Calu3 (cell line): ENCODE measurements at regions of chr4 and their contacts with region 1.

Region 1: GRCh38 chr4:169024762-169025161 is 14.7 kb upstream of the CBR4 start:
- DNase-seq: peak; percentile 9
- H3K4me3 Mint-ChIP-seq: no peak overlapping the region
- H3K27ac Mint-ChIP-seq: no peak overlapping the region
- H3K4me1 Mint-ChIP-seq: peaks cover 11% of the 10 kb centered on the region
- H3K27me3 Mint-ChIP-seq: no peaks in the 10 kb centered on the region
- CTCF ChIP-seq: peak; percentile 42

Region 2: DNA sequence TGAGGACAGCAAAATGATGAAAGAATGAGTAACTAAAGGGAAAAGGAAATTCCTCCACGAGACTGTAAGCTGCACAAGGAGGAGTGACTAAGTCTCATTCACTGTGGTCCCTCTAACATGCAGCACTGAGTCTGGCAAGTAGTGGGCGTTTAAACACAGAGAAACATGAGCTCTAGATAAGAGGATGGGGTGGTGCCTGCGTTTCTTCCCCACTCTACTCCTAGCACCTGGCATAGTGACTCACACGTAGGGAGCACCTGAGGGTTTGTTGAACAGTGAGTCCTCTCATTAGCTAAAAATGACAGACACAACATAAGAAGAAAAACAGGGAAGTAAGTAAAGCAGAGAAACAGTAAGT is 91.1 kb after region 1 on chr4:
- CTCF ChIA-PET with region 1: no interaction called
- intact Hi-C with region 1: loop called (anchors 1 kb)
- DNase-seq: peak; percentile 78
- H3K4me3 Mint-ChIP-seq: peak overlapping the region; percentile 5
- H3K27ac Mint-ChIP-seq: peak overlapping the region; percentile 85
- H3K4me1 Mint-ChIP-seq: peaks cover 68% of the 10 kb centered on the region
- H3K27me3 Mint-ChIP-seq: no peaks in the 10 kb centered on the region
- CTCF ChIP-seq: no peak

Region 3: DNA sequence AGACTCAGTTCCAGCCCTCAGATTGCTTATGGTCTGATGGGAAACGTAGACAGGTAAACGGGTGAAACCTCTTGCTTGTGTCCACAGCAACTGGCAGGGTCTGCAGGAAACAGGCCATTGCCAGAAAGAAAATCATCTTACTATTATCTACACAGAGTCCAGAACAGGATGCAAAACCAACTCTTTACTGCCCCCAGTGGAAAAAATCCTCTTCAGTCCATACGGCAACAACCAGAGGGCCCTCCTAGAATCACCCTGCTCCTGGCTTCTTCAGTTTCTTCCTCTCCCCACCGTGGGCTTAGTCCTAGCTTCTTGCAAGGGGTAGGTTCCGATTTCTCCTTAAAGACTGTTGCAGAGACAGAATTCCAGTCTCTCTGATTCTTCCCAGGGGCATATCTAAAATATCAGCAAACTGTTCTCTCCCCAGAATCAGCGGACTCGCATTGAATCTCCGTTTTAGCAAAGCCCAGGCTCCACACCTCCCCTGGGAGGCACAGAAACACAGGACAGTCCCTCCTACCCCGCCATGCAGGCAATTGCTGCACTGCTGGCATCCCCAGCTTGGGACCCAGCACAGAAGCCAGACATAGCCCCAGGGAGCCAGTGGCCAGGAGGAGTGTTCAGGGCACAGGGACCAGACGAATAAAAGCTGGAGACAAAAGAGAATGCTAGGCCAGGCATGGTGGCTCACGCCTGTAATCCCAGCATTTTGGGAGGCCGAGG is 287.0 kb after region 1 on chr4:
- CTCF ChIA-PET with region 1: no interaction called
- intact Hi-C with region 1: loop called (anchors 5 kb)
- DNase-seq: peak; percentile 13
- H3K4me3 Mint-ChIP-seq: no peak overlapping the region
- H3K27ac Mint-ChIP-seq: no peak overlapping the region
- H3K4me1 Mint-ChIP-seq: peaks cover 31% of the 10 kb centered on the region
- H3K27me3 Mint-ChIP-seq: no peaks in the 10 kb centered on the region
- CTCF ChIP-seq: no peak

Region 4: GRCh38 chr4:169485791-169486742 is 461.3 kb after region 1 on chr4:
- CTCF ChIA-PET with region 1: no interaction called
- intact Hi-C with region 1: loop called (anchors 1 kb)
- DNase-seq: peak; percentile 50
- H3K4me3 Mint-ChIP-seq: no peak overlapping the region
- H3K27ac Mint-ChIP-seq: no peak overlapping the region
- H3K4me1 Mint-ChIP-seq: no peaks in the 10 kb centered on the region
- H3K27me3 Mint-ChIP-seq: no peaks in the 10 kb centered on the region
- CTCF ChIP-seq: no peak